ENCODE measurements at regions of chr5 and their contacts with region 1.

Region 1: GRCh38 chr5:10111571-10111970 is 138.1 kb downstream of the ATPSCKMT start:
- DNase-seq: peak; percentile 33
- H3K4me3 ChIP-seq: no peak overlapping the region
- H3K27ac ChIP-seq: no peak overlapping the region
- H3K4me1 ChIP-seq: no peaks in the 10 kb centered on the region
- H3K27me3 ChIP-seq: no peaks in the 10 kb centered on the region
- CTCF ChIP-seq: peak; percentile 46 to 62

Region 2: DNA sequence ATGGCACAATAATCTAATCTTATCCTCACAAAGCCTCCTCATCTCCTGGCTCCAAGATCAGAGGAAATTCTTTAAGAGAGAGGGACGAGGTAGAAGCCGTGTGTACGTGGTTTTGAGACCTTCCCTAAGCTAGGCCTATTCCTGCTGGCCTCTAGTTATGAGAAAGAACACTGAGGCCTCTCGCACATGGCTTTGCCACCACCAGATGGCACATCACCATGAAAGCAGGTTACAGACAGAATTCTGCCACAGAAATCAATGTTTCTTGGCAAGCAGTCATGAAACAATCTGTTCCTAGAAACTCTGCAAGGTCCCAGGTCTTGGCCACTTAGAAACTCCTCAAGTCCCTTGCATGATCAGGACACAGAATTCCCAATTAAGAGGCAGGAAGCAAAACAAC is 213.3 kb before region 1 on chr5:
- CTCF ChIA-PET with region 1: no interaction called
- dilution Hi-C with region 1: no loop called
- in situ Hi-C with region 1: no loop called
- intact Hi-C with region 1: loop called (anchors 5 kb)
- DNase-seq: peak; percentile 13
- H3K4me3 ChIP-seq: no peak overlapping the region
- H3K27ac ChIP-seq: no peak overlapping the region
- H3K4me1 ChIP-seq: no peaks in the 10 kb centered on the region
- H3K27me3 ChIP-seq: no peaks in the 10 kb centered on the region
- CTCF ChIP-seq: peak; percentile 49 to 74

Region 3: DNA sequence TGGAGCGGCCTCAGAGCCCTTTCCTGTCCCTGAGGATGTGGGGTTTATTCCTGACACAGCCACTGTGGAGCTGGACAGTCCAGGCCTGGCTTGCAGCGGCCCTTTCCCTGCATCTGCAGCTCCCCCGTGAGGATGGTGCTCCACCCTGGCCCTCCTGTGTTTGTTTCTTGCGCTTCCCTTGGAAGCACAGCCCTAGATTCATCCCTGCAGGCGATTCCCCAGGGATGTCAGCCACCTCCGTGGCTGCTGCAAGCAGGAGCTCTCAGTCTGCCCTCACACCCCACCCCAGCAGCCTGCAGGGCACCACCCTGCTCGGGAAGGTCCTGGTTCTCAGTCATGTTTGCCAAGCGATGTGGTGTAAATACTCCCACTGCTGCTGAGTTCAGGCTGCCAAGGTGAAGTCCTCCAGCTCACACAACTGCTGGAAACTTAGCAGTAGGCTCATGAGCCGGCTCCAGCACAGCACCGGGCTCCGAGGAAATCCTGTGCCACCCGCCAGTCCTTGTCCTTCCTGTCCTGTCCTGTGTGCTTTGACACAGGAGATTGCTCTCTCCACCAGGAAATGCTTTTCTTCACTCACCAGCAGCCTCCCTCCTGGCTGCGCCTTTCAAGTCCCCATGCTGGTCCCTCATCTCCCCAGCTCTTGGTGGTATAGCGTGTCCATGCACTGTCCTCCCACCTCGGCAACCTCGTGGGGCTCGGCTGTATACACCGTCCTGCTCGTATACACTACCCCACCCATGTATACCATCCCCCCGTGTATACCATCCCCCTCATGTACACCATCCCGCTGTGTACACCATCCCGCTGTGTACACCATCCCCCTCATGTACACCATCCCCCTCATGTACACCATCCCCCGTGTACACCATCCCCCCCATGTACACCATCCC is 346.4 kb after region 1 on chr5:
- CTCF ChIA-PET with region 1: no interaction called
- dilution Hi-C with region 1: no loop called
- in situ Hi-C with region 1: no loop called
- intact Hi-C with region 1: no loop called
- DNase-seq: no peak
- H3K4me3 ChIP-seq: no peak overlapping the region
- H3K27ac ChIP-seq: no peak overlapping the region
- H3K4me1 ChIP-seq: peaks cover 50% of the 10 kb centered on the region
- H3K27me3 ChIP-seq: no peaks in the 10 kb centered on the region
- CTCF ChIP-seq: peak in 1 of 2 donors; percentile 25